ENCODE measurements at regions of chr7 and their contacts with region 1.

Region 1: GRCh38 chr7:134789967-134790685 is 10.7 kb downstream of the CALD1 start:
- DNase-seq: peak in 1 of 2 donors; percentile 68
- ATAC-seq: peak; percentile 76 to 87 (median 82)
- H3K4me3 ChIP-seq: peak overlapping the region in 3 of 10 donors; percentile 0 to 9 (median 9)
- H3K27ac ChIP-seq: peak overlapping the region; percentile 60 to 90 (median 83)
- H3K4me1 ChIP-seq: peaks cover 13 to 95% (median 62%) of the 10 kb centered on the region in 9 donors
- H3K27me3 ChIP-seq: no peaks in the 10 kb centered on the region
- CTCF ChIP-seq: no peak

Region 2: DNA sequence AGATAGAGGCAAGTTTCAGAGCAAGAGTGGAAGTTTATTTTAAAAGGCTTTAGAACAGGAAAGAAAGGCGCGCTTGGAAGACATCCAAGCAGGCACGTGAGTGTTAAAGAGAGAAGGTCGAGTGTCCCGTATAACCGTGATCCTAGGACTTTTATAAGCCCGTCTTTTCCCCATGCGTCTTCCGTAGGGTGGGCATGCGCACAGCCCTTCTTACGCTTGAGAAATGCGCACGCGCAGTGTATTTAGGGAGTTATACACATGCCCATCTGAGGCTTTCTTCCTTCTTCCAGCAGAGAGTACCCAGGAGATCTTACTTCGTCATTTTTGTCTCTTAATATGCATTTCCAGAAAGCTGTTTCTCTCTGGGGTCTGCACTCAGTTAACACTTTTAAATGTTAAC is 41.7 kb after region 1 on chr7:
- intact Hi-C with region 1: loop called in 2 of 10 experiments (anchors 5 kb)
- DNase-seq: peak; percentile 44 to 50
- ATAC-seq: peak in 3 of 8 donors; percentile 28 to 47 (median 29)
- H3K4me3 ChIP-seq: peak overlapping the region in 4 of 10 donors; percentile 4 to 21 (median 14)
- H3K27ac ChIP-seq: peak overlapping the region in 7 of 10 donors; percentile 34 to 83 (median 59)
- H3K4me1 ChIP-seq: peaks cover 2 to 99% (median 65%) of the 10 kb centered on the region in 9 donors
- H3K27me3 ChIP-seq: no peaks in the 10 kb centered on the region
- CTCF ChIP-seq: no peak